ENCODE measurements at regions of chr2 and their contacts with region 1.

Region 1: DNA sequence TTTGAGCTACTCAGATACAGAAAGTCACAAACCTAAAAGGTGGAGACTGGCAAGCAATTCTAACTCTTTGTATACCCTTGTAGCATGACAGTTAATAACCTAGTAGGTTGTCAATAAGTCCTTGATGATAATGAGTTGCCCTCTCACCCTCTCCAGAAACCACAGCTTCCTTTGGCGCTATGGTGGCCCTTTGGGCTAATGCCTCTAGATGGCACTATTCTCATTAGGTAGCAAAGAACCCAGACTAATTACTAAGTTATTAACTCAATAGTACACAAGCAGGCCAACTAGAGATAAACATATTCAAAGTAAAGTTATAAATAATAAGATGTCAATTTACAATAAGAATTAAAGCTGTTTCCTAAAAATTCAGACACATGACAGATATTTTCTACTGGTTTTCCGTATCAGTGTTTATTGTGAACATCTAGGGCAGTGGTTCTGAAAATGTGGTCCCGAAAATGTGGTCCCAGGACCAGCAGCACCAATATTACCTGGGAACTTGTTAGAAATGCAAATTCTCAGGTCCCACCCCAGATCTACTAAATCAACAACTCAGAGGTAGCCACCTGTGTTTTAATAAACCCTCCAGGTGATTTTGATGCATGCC is 41.1 kb downstream of the LDAH start:
- DNase-seq: peak; percentile 13
- ATAC-seq: peak; percentile 90
- H3K4me3 ChIP-seq: no peak overlapping the region
- H3K27ac ChIP-seq: no peak overlapping the region
- H3K4me1 ChIP-seq: no peaks in the 10 kb centered on the region
- H3K27me3 ChIP-seq: no peaks in the 10 kb centered on the region
- CTCF ChIP-seq: peak; percentile 80

Region 2: DNA sequence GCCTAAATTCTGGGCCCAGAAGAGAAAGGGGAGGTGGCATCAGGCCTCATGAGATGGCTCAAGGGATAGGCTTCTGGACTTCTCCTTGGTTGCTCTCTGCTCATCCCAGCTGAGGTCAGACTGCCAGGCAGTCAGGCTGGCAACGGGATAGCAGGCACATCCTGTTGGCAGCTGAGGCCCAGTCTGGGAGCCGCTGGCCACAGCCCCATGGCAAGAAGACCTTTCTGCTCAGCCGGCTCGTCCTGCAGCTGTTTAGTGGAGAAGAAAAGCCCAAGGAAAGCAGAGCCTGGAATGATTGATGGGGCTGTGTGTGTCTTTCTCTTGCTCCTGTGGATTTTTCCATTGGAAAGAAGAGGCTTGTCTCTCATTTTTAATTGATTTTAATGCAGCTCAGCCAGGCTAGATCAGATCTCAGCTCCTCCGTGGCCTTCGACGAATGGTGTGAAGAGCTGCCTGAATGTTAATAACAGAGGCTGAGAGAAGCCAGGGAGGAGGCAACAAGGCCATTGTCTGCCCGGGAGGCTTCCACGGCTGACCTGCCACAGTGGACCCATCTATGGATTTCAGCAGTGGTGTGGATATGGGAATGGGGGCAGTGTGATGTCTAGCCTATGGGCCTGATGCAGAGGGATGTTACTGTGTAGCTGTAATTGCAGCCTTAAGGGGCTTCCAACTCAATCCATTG is 230.4 kb before region 1 on chr2:
- CTCF ChIA-PET with region 1: no interaction called
- POLR2A ChIA-PET with region 1: no interaction called
- in situ Hi-C with region 1: no loop called
- intact Hi-C with region 1: no loop called
- DNase-seq: no peak
- ATAC-seq: peak; percentile 60; the same call in 1 of the 2 replicates
- H3K4me3 ChIP-seq: no peak overlapping the region
- H3K27ac ChIP-seq: no peak overlapping the region
- H3K4me1 ChIP-seq: no peaks in the 10 kb centered on the region
- H3K27me3 ChIP-seq: no peaks in the 10 kb centered on the region
- CTCF ChIP-seq: no peak

Region 3: DNA sequence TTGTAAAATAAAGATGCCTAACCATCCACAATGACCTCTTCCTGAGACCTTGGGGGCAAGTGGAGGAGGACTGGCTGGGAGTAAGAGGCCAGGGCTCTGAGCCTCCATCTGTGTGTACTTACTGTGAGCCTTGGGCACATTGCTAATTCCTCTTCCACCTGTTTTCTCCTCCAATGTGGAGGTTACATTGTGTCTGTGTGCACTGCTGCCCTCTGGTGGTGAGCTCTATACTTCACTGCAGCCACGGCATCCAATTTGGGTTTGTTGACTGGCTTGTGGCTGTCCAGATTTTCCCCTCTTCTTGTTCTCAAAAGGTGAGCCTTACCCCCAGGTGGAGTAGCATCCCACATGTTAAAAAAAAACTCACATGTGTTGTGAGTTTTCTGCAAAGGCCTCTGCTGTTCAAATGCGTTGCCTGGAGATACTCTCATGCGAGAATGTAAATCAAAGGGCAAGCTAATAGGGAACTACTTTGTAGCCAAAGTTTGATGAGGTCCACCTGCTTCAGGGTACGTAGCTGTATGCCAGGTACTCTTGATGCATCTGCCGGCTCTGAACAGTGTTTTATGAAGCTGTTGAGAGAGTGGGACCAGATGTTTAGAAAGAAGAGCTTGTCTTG is 181.3 kb after region 1 on chr2:
- CTCF ChIA-PET with region 1: interaction called, 7 read pairs
- POLR2A ChIA-PET with region 1: no interaction called
- in situ Hi-C with region 1: no loop called
- intact Hi-C with region 1: loop called (anchors 1 kb)
- DNase-seq: peak; percentile 35
- ATAC-seq: peak; percentile 88
- H3K4me3 ChIP-seq: no peak overlapping the region
- H3K27ac ChIP-seq: no peak overlapping the region
- H3K4me1 ChIP-seq: no peaks in the 10 kb centered on the region
- H3K27me3 ChIP-seq: peaks cover 18% of the 10 kb centered on the region
- CTCF ChIP-seq: peak; percentile 90

Region 4: GRCh38 chr2:21025690-21026478 is 244.1 kb after region 1 on chr2:
- CTCF ChIA-PET with region 1: interaction called, 3 read pairs
- POLR2A ChIA-PET with region 1: no interaction called
- in situ Hi-C with region 1: no loop called
- intact Hi-C with region 1: loop called (anchors 10 kb)
- DNase-seq: no peak
- ATAC-seq: no peak
- H3K4me3 ChIP-seq: no peak overlapping the region
- H3K27ac ChIP-seq: no peak overlapping the region
- H3K4me1 ChIP-seq: no peaks in the 10 kb centered on the region
- H3K27me3 ChIP-seq: peaks cover 15% of the 10 kb centered on the region
- CTCF ChIP-seq: no peak